Activated B cell treated with CpG ODN at 0.5 μM for 24 hours (primary cell): ENCODE measurements at regions of chr9 and their contacts with region 1.

Region 1: GRCh38 chr9:21455320-21455719 is 15.1 kb downstream of the IFNA1 start:
- DNase-seq: no peak
- ATAC-seq: peak; percentile 75
- H3K4me3 Mint-ChIP-seq: no peak overlapping the region
- H3K27ac Mint-ChIP-seq: no peak overlapping the region
- H3K4me1 Mint-ChIP-seq: no peaks in the 10 kb centered on the region
- H3K27me3 Mint-ChIP-seq: peaks cover 33% of the 10 kb centered on the region
- CTCF ChIP-seq: no peak

Region 2: GRCh38 chr9:21239911-21240310 is 215.4 kb before region 1 on chr9 and contains the start of gene IFNA14:
- CTCF ChIA-PET with region 1: interaction called, 4 read pairs
- POLR2A ChIA-PET with region 1: no interaction called
- intact Hi-C with region 1: loop called (anchors 1 kb)
- DNase-seq: no peak
- ATAC-seq: no peak
- H3K4me3 Mint-ChIP-seq: no peak within 1 kb of the TSS
- H3K27ac Mint-ChIP-seq: no peak within 1 kb of the TSS
- H3K4me1 Mint-ChIP-seq: peaks cover 6% of the 10 kb centered on the region
- H3K27me3 Mint-ChIP-seq: peaks cover 6% of the 10 kb centered on the region
- CTCF ChIP-seq: no peak
- total RNA-seq, gene IFNA14: not detected in 2 replicates

Region 3: DNA sequence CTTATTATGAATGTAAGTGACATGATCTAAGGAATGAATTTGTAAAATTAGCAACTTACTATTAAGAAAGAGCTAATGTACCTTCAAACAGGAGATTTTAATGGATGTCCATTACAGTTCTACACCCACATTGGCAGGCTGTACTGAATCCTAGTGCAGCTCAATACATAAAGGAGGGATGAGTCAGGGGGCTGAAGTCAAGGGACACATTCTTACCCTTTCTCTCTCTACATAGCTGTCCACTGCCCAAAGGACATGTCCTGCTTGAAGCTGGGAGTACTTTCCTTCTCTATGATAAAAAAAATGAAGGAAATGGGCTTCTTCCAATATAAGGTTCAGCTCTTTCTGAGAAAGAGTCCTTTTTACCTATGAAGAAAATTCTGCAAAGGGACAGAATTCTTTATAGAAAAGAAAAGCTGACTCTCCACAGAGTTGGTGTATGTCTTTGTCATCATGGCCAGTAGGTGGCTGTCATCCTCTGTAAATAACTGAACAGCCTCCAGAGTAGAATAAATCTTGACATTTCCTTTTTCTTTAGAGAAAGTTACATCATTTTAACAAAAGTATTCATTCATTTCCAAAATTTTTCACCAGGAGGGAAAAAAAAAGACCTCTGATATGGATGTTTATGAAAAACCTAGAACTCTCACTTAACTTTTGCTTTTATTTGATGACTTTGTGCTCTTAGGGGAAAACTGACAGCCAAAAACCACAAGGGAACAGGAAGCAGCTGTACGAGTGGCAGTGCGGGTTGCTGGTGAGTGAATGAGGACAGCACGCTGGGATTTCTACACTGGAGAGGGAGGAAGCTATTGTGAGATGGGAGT is 202.4 kb before region 1 on chr9:
- CTCF ChIA-PET with region 1: interaction called, 6 read pairs
- POLR2A ChIA-PET with region 1: no interaction called
- intact Hi-C with region 1: loop called (anchors 1 kb)
- DNase-seq: no peak
- ATAC-seq: peak; percentile 61
- H3K4me3 Mint-ChIP-seq: no peak overlapping the region
- H3K27ac Mint-ChIP-seq: no peak overlapping the region
- H3K4me1 Mint-ChIP-seq: peaks cover 4% of the 10 kb centered on the region
- H3K27me3 Mint-ChIP-seq: peaks cover 25% of the 10 kb centered on the region
- CTCF ChIP-seq: no peak

Region 4: DNA sequence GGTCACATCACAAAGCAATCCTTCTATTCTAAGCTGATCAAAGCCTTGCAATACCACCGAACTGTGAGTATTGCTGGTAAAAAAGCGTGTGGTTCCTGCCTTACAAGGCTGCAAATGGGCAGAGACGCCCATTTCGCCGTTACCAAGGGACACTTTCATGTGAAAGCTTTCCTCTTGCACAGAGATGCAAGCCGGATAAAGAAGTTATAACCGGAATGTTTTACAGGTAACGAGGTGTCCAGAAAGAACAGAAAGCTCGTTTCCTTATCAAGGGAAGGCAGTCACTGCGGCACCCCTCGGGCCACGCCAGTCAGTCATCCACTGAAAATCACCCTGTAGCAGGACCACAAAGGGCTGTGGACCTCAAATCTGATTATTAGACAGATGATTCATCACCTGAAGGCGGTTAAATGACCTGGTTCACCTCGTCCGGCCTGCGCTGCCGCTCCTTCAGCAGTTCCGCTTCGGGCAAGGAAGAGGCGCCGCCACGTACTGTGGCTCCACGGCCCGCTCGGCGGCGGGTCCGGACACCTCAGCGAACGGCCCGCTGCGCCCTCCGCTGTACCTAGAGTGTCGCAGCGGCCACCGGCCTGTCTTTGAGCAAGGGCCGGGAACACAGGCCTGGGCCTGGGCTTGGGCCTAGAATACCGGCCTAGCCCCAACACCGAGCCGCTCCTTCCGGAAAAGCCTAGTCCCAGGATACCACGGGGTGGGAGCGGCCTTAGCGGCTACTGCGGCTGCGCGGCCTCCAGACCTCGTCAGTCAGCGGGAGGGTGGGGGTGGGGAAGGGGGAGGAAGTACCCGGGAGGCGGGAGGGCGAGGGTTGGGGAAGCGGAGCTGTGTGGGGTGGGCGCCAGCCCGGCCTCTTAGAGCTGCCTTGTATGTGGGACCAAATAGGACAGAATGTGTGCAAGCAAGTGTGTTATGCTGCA is 120.4 kb before region 1 on chr9 and contains the start of gene KLHL9:
- CTCF ChIA-PET with region 1: interaction called, 12 read pairs
- POLR2A ChIA-PET with region 1: no interaction called
- intact Hi-C with region 1: no loop called
- DNase-seq: peak; percentile 76
- ATAC-seq: peak; percentile 88
- H3K4me3 Mint-ChIP-seq: peak within 1 kb of the TSS; percentile 91
- H3K27ac Mint-ChIP-seq: peak within 1 kb of the TSS; percentile 87
- H3K4me1 Mint-ChIP-seq: peaks cover 50% of the 10 kb centered on the region
- H3K27me3 Mint-ChIP-seq: peaks cover 7% of the 10 kb centered on the region
- CTCF ChIP-seq: no peak
- total RNA-seq, gene KLHL9: 13.1 and 13.8 TPM in 2 replicates